ENCODE measurements at regions of chr2 and their contacts with region 1.

Region 1: GRCh38 chr2:188512456-188512855 is 220.8 kb downstream of the GULP1 start:
- DNase-seq: no peak
- ATAC-seq: peak; percentile 70
- H3K4me3 ChIP-seq: no peak overlapping the region
- H3K27ac ChIP-seq: no peak overlapping the region
- H3K4me1 ChIP-seq: peaks cover 0 to 2% of the 10 kb centered on the region in 2 donors
- H3K27me3 ChIP-seq: no peaks in the 10 kb centered on the region

Region 2: DNA sequence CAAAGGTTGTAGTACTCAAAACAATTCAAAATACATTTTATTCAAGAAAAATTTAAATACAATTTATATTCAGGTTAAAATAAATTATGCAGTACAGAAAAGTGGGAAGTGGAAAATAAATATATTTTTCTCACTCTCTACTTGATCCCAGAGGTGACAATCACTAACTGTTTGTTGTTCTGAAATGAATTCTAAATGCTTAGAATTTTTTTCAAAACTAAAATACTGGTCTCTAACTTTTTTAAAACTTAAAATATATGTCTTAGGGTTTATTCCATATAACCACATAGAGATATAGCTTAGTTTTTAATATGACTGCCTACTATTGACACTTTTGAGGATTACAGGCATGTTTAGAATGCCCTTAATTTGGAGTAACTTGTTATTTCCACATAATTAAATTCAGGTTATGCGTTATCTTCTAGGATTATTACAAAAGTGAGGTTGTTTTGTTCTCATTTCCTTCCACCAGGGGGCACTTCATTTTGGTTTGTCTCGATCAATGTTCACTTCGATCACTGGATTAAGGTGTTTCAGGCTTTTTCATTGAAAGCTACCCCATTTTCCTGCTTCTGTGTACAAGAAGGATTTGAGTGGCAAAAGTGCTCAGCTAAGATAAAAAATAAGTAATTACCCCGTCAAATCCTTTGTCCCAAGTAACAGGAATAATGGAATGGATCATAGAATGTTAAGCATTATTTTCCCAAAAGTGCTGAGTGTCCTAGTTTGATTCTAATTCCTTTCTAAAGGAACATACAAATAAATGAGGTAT is 931.1 kb before region 1 on chr2:
- intact Hi-C with region 1: loop called (anchors 5 kb)
- DNase-seq: no peak
- ATAC-seq: peak; percentile 59
- H3K4me3 ChIP-seq: peak overlapping the region; percentile 31 to 90
- H3K27ac ChIP-seq: no peak overlapping the region
- H3K4me1 ChIP-seq: peaks cover 0 to 2% of the 10 kb centered on the region in 2 donors
- H3K27me3 ChIP-seq: no peaks in the 10 kb centered on the region

Region 3: GRCh38 chr2:187842978-187843847 is 669.2 kb before region 1 on chr2:
- intact Hi-C with region 1: loop called (anchors 10 kb)
- DNase-seq: no peak
- ATAC-seq: peak; percentile 78
- H3K4me3 ChIP-seq: no peak overlapping the region
- H3K27ac ChIP-seq: no peak overlapping the region
- H3K4me1 ChIP-seq: no peaks in the 10 kb centered on the region
- H3K27me3 ChIP-seq: no peaks in the 10 kb centered on the region

Region 4: GRCh38 chr2:188199716-188200131 is 312.7 kb before region 1 on chr2:
- intact Hi-C with region 1: loop called in 1 of 2 experiments (anchors 10 kb)
- DNase-seq: no peak
- ATAC-seq: no peak
- H3K4me3 ChIP-seq: no peak overlapping the region
- H3K27ac ChIP-seq: no peak overlapping the region
- H3K4me1 ChIP-seq: peaks cover 0 to 3% of the 10 kb centered on the region in 2 donors
- H3K27me3 ChIP-seq: no peaks in the 10 kb centered on the region

Measured in aorta (tissue), 5 donors.